Posterior vena cava (tissue), 2 donors: ENCODE measurements at regions of chr17 and their contacts with region 1.

Region 1: DNA sequence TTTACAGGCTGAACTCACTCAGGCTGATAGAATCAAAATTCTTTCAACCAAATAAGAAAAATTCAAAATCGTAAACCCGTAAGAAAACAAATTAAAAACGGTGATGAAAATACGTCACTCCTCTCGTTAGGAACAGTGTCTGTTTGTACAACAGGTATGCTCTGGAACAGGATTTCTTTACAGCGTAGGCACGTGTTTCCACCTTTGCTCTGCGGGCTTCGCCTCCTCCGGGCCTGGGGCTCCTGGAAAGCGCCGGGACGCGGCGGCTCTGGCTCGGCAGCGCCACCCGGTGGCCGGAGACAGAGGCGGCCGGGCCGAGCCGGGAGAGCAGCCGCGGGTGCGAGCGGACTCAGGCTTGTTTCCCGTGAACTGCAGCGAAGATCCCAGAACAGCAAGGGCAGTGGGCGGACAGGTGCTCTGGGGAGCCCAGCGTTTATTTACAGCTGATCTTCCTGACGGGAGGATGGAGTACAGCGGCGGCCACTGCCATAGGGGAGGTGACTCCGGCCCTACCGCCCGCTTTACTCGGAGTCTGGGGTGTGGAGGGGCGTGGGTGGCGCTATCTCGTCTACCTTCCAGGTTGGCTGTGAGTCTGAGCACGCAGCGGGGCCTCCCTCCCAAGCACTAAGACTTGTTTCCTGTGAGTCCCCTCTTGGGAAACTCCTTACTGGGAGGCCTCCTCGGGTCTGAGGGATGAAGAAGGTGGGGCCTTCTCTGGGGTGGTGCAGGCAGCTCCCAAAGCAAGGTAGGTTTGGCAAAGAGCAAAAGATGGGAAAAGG is 40.5 kb upstream of the ATP2A3 start:
- DNase-seq: peak; percentile 87

Region 2: GRCh38 chr17:3859940-3860339 is 144.8 kb before region 1 on chr17:
- intact Hi-C with region 1: loop called (anchors 5 to 10 kb)
- DNase-seq: no peak

Region 3: DNA sequence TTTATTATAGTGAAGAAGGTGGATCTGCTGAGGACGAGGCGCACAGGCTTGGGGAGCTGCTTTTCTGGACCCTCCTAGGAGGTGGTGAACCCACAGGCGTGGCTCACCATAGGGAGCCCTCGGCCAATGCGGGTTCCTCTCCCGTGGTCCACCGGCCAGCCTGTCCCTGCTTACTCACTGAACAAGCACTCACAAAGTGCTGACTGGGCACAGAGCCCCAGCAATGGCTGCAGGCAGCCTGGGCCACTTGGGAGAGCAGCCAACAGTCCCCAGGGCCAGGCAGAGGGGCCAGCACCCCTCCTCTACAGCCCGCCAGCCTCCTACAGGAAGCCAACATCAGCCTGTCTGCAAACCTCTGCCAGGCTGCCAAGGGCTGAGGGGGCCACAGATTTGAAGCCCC is 139.5 kb before region 1 on chr17:
- intact Hi-C with region 1: loop called (anchors 5 to 10 kb)
- DNase-seq: no peak

Region 4: GRCh38 chr17:3913531-3914311 is 91.0 kb before region 1 on chr17:
- intact Hi-C with region 1: loop called (anchors 5 to 10 kb)
- DNase-seq: peak; percentile 94